Astrocyte of the cerebellum (primary cell): ENCODE measurements at regions of chr15 and their contacts with region 1.

Region 1: GRCh38 chr15:58331903-58332675 is 99.7 kb upstream of the LIPC start:
- DNase-seq: peak; percentile 93
- H3K4me3 ChIP-seq: no peak overlapping the region
- CTCF ChIP-seq: no peak

Region 2: DNA sequence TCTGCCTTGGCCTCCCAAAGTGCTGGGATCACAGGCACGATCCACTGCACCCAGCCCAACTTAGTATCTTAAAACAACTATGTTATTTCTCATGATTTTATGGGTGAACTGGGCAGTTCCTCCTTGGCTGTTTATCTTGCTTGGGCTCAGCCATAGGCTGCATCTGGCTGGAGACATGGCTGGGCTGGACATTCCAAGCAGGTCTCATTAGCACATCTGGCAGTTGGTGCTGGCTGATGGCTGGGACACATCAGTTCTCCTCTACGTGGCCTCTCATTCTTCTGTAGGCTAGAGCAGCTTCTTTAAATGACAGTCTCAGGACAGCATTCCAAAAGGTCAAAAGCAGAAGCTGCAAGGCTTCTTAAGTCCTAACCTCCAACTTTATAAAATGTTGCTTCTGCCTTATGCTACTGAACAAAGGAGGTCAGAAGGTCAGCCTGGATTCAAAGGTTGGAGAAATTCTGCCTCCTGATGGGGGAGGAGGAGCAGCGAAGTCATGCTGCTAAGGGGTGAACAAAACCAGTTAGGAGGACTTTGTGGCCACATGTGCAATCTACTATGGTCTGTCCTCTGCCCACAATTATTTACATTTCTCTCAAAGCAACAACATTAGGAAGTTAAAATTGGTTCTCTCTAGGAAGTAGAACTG is 49.9 kb before region 1 on chr15:
- in situ Hi-C with region 1: no loop called
- DNase-seq: no peak
- H3K4me3 ChIP-seq: no peak overlapping the region
- CTCF ChIP-seq: no peak

Region 3: DNA sequence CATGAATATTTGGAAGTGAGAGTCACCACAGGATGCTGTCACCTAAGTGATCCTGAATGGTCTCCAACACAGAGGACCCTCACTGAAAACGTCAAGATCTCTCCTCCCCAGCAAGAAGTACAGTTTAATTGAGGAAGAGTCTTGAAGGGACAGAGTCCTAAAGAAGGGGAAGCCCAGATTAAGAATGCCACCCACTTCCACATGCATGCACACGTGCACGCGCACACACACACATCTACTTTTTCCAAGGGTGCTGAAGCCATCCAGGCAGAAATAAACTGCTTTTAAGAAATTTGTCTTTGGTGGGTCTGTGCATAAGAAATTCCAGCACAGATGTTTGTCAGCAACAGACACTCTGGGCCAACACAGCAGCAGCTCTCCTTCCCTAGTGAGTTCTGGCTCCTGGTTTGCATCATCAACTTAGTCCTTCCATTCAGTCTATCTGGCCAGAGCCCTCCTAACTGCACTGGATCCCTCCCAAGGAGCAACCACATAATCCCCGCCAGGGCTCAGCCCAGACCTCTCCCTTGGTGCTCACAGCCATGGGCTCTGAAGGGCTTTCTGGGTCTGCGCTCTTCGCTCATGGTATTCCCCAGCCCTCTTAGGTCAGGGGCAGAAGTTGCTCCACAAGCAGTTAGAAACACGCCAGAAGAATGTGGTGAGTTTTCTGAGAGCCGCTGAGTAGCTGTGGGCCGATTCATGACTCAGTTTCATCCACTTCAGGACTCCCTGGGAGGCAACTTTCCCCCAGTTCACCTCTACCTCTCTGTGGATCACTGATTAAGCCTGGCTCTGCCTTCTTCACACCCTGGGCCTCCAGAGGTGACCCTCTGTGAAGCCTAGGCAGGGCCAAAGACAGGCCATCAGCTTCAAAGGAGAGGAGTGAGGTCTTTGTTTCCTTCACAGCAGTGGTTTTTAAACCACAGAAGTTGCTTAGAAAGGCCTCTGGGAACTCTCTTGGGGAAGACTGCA is 32.9 kb before region 1 on chr15:
- in situ Hi-C with region 1: loop called (anchors 5 kb)
- DNase-seq: peak; percentile 81
- H3K4me3 ChIP-seq: no peak overlapping the region
- CTCF ChIP-seq: no peak